Body of pancreas (tissue), 4 donors: ENCODE measurements at regions of chr13 and their contacts with region 1.

Region 1: DNA sequence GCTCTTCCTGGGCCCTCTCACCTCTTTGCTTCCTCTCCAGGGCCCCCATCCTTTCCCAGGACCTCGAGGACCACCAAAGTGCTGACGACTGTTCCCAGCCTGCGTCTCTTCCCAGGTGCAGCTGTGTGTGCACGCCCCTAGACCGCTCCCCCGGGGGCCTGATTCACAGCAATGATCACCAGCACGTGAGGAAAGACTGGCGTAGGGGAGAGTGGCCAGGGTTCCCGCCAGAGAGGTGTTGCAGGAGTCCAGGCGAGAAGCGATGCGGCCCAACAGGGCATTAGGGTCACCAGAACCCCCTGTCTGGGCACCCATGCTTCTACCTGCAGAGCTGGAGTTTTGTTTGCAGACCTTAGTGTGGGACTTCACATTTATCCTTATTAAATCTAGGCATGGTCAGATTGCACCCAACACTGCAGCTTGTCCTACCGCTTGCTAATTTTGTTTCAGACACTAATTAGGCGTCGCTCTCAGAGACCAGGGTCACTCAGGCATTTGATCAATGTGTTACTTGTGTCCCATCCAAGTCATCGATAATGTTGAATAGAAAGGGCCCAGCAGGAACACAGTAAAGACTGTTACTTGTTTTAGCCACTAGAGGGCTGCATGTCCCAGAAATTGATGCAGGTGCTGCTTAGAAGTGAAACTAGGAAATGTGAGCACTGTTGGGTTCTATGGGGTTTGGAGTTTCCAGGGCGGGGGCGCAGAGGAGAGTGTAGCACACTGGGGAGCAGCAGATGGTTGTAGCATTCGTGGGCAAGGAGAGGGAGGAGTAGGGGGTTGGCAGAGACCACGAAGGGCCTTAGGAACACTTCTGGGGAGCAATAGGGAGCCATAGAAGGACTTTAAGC is 53.2 kb downstream of the CDADC1 start:
- DNase-seq: peak; percentile 50 to 73 (median 63)
- ATAC-seq: peak; percentile 80
- H3K4me3 ChIP-seq: no peak overlapping the region
- H3K27ac ChIP-seq: peak overlapping the region in 1 of 4 donors; percentile 44
- H3K4me1 ChIP-seq: peaks cover 34% of the 10 kb centered on the region
- H3K27me3 ChIP-seq: no peaks in the 10 kb centered on the region
- CTCF ChIP-seq: peak; percentile 72 to 95 (median 92)
- POLR2A ChIP-seq: no peak

Region 2: DNA sequence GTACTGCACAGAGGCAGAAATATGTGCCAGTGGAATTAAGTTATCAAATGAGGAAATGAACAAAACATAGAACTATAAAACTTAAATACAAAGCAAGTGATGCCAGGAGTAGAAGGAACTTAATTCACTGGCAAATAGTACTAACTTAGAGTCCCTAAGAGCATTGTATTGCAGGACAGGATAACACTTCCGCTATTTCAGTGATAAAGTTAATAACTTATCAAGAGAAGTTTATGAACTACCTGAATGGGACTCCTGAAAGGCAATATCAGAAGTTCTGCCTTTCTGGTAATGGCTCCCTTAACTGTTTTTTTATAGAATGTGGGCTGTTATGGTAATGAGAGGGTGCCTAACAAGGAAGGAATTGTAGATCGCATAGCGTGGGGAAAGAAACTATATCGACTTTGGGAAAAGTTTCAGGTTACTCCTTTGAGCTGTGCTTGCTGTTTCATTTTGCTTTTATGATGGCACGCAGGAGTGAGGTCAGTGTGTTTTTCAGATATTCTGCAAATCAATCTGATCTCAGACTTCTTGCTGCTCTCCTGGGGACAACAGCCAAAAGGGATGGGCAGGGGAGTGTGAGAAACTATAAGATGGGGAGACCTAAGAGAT is 176.2 kb before region 1 on chr13:
- intact Hi-C with region 1: no loop called
- DNase-seq: no peak
- ATAC-seq: peak; percentile 65
- H3K4me3 ChIP-seq: no peak overlapping the region
- H3K27ac ChIP-seq: peak overlapping the region in 3 of 4 donors; percentile 34 to 60 (median 37)
- H3K4me1 ChIP-seq: no peaks in the 10 kb centered on the region
- H3K27me3 ChIP-seq: no peaks in the 10 kb centered on the region
- CTCF ChIP-seq: no peak
- POLR2A ChIP-seq: no peak

Region 3: DNA sequence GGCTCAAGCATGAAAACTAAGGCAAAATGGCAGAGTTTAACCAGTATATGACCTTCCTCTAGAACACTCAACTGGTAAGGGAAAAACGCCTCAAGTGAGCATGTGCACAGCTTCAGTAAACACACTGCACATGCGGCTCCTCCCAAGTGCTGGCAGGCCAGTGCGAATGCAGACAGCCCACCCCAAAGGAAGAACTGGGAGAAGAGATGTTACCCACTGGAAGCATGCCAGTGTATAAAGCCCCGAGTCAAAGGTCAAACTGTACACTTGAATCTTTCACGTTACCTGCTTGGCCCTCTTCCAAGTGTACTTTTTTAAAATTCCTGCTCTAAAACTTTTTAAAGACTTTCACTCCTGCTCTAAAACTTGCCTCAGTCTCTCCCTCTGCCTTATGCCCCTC is 303.6 kb after region 1 on chr13:
- intact Hi-C with region 1: loop called (anchors 5 kb)
- DNase-seq: peak in 3 of 4 donors; percentile 13 to 17 (median 16)
- ATAC-seq: no peak
- H3K4me3 ChIP-seq: no peak overlapping the region
- H3K27ac ChIP-seq: no peak overlapping the region
- H3K4me1 ChIP-seq: peaks cover 11% of the 10 kb centered on the region
- H3K27me3 ChIP-seq: no peaks in the 10 kb centered on the region
- CTCF ChIP-seq: no peak
- POLR2A ChIP-seq: no peak